OCI-LY7 (cell line): ENCODE measurements at regions of chr1 and their contacts with region 1.

Region 1: DNA sequence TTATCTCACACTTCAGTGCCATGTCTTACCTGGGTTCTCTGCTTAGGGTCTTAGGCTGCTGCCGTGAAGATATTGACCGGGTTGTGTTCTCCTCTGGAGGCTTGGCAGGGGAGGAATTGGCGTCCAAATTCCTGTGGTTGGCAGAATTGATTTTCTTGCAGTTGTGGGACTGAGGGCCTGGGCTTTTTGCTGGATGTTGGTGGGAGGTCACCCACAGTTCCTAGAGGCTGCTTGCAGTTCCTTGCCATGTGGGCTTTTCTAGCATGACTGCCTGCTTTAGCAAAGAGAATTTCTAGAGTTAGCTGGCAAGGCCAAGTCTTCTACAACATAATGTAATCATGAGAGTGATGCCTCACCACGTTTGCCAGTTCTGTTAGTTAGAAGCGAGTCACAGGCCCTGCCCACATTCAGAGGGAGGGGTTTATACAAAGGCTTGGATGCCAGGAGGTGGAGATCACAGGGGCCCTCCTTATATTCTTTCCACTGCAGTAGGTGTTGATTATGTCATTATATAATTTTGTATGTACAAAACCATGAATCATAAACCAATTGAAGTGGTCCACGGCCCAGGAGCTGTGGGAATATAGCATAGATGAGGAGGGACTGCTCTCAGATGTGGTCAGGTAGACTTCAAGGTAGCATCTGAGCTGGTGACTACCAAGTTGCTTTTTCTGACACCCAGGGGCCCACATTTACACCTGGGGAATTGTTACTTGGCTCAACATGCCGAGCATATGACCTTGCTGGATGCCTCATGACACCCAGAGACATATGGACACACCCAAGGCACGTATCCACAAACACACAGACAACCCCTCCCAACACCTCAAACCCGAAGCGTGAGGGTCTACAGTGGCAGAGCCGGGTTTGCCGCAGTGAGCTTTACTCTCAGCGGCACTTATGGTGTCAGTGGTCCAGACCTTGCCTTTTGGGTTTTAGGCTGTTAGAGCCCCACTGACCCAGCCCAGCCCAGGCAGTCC is 6.7 kb downstream of the UBL4B start:
- DNase-seq: no peak
- H3K4me3 ChIP-seq: no peak overlapping the region
- H3K27ac ChIP-seq: no peak overlapping the region
- H3K4me1 ChIP-seq: no peaks in the 10 kb centered on the region
- CTCF ChIP-seq: no peak

Region 2: DNA sequence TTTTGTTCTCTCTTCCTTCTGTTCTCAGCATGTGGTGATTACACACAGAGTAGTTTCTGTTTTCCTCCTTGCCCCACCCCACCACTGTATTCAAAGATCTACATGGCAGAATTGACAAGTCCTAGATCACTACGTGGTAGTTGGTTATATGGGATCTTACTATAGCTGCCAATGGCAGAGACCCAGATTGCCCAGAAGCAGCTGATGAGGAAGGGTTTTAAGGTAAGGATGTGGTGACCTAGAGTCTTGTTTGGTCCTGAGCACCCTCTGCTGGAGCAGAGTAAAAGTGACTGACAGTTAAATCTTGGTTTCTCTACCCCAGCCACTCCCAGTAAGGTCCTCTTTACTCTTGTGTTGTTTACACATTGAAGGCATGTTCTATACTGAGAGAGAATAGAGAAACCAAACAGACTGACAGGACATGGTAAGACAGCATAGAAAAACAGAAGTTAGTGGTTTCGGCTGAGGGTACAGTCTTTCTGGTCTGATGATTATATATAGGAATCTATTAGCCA is 107.3 kb before region 1 on chr1:
- CTCF ChIA-PET with region 1: no interaction called
- POLR2A ChIA-PET with region 1: no interaction called
- intact Hi-C with region 1: no loop called
- DNase-seq: peak; percentile 75
- H3K4me3 ChIP-seq: no peak overlapping the region
- H3K27ac ChIP-seq: peak overlapping the region; percentile 50
- H3K4me1 ChIP-seq: peaks cover 19% of the 10 kb centered on the region
- CTCF ChIP-seq: peak; percentile 83

Region 3: DNA sequence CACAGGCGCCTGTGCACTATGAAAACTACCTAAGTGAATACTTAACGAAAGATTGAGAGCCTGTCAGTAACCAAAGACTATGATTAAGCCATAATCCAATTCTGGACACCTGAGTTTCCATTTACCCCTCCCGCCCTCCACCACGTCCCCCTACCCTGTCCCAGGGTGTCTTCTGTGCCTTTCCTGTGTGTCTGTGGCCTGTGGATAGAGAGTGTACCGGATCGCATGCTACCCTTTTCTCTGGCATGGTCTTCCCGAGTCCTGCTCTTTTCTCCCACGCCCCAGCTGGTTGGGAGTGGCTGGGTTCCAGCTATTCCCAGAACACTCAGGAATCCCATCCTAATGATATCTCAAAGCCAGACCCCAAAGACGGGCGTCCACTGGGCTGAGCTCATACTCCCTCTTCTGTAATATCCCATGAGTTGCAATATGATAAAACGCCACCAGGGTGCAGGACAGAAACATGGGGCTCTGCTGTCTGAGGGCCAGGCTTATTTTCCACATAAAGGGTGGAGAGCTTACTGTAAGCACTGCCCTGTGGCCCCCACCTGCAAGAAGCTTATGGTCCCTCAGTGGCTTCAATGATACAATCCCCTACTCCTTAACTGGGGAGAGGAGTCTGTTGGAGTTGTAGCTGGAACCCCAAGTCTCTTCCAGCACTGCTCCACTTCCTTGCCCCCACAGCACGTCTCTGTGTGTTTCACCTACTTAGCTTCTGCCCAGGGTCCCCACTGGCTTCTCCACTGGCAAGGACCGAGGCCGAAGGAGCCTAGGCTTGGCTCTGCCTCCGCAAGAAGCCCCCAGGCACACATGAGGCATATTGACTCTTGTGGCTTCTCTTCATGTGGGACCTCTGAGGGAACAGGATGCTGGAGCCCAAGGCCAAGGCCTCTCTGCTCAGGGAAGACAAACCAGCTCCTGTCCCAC is 30.9 kb before region 1 on chr1:
- CTCF ChIA-PET with region 1: no interaction called
- POLR2A ChIA-PET with region 1: no interaction called
- intact Hi-C with region 1: loop called (anchors 5 kb)
- DNase-seq: peak; percentile 68
- H3K4me3 ChIP-seq: no peak overlapping the region
- H3K27ac ChIP-seq: no peak overlapping the region
- H3K4me1 ChIP-seq: no peaks in the 10 kb centered on the region
- CTCF ChIP-seq: peak; percentile 84

Region 4: DNA sequence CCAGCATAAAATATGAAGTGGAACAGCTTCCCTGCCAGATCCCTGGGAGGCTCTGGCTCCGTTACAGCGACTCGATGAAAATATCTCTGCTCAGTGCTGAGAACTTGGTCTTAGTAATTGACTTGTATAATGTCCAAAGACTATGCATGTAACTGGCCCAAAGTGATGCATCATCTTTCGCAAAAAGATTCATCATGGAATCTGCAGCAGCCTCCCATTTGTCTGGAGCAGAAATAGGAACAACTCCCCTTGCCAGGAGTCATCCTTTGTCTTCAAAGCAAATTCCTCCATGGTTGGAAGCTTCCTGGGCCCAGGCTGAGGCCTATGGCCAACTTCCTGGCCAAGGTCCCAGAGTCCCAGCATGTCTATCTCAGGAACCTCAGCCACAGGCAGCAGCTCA is 14.5 kb after region 1 on chr1:
- CTCF ChIA-PET with region 1: no interaction called
- POLR2A ChIA-PET with region 1: no interaction called
- intact Hi-C with region 1: no loop called
- DNase-seq: no peak
- H3K4me3 ChIP-seq: no peak overlapping the region
- H3K27ac ChIP-seq: no peak overlapping the region
- H3K4me1 ChIP-seq: no peaks in the 10 kb centered on the region
- CTCF ChIP-seq: no peak

Region 5: DNA sequence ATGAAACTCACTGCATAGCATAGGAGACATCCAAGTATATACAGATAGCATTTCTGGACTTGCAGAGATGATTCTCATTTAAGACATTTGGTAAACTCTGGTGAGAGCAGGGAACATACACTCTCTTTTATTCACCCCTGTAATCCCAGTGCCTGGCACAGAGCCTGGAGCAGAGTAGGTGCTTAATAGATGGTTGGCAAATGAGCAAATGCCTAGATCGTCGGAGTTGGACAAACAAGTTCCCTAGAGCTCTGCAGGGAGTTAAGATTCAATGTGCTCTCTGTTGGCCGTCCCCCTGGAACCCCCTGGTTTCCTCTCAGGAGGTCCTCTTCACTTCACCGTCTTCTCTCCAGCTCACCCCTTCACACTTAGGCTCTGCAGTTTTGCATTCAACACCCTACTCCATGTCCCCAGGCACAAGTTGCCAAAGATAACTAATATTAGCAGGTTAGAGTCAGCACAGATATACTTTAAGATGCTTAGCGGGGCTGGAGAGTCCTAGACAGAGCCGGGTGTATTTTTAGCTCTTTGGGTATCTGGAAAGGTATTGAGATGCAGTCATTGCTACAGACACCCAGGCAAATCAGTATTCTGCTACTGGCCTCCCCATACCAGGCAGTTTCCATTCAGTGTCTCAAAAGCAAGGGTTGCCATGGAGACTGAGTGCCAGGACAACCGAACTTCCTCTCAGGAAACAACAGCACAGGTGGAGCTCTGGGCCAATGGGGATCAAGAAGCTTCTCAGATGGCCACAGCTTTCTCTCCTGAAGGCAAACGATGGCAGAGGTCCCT is 136.3 kb after region 1 on chr1:
- CTCF ChIA-PET with region 1: no interaction called
- POLR2A ChIA-PET with region 1: no interaction called
- intact Hi-C with region 1: no loop called
- DNase-seq: peak; percentile 26
- H3K4me3 ChIP-seq: no peak overlapping the region
- H3K27ac ChIP-seq: no peak overlapping the region
- H3K4me1 ChIP-seq: no peaks in the 10 kb centered on the region
- CTCF ChIP-seq: no peak

Region 6: GRCh38 chr1:110281363-110282290 is 162.7 kb after region 1 on chr1:
- CTCF ChIA-PET with region 1: no interaction called
- POLR2A ChIA-PET with region 1: no interaction called
- intact Hi-C with region 1: no loop called
- DNase-seq: no peak
- H3K4me3 ChIP-seq: no peak overlapping the region
- H3K27ac ChIP-seq: no peak overlapping the region
- H3K4me1 ChIP-seq: no peaks in the 10 kb centered on the region
- CTCF ChIP-seq: no peak